ENCODE measurements at regions of chr14 and their contacts with region 1.

Region 1: GRCh38 chr14:50003213-50004031 is 110.5 kb downstream of the ARF6 start:
- DNase-seq: peak; percentile 89
- H3K4me3 ChIP-seq: peak overlapping the region; percentile 67
- H3K27ac ChIP-seq: peak overlapping the region; percentile 93
- H3K4me1 ChIP-seq: peaks cover 86% of the 10 kb centered on the region
- CTCF ChIP-seq: peak; percentile 38

Region 2: GRCh38 chr14:49598485-49599300 is 404.7 kb before region 1 on chr14 and contains the start of gene LRR1:
- CTCF ChIA-PET with region 1: no interaction called
- POLR2A ChIA-PET with region 1: no interaction called
- intact Hi-C with region 1: loop called (anchors 5 kb)
- DNase-seq: peak; percentile 88
- H3K4me3 ChIP-seq: peak within 1 kb of the TSS; percentile 99
- H3K27ac ChIP-seq: peak within 1 kb of the TSS; percentile 94
- H3K4me1 ChIP-seq: peaks cover 40% of the 10 kb centered on the region
- CTCF ChIP-seq: no peak
- total RNA-seq, gene LRR1: 83.4 and 89.8 TPM in 2 replicates

Region 3: DNA sequence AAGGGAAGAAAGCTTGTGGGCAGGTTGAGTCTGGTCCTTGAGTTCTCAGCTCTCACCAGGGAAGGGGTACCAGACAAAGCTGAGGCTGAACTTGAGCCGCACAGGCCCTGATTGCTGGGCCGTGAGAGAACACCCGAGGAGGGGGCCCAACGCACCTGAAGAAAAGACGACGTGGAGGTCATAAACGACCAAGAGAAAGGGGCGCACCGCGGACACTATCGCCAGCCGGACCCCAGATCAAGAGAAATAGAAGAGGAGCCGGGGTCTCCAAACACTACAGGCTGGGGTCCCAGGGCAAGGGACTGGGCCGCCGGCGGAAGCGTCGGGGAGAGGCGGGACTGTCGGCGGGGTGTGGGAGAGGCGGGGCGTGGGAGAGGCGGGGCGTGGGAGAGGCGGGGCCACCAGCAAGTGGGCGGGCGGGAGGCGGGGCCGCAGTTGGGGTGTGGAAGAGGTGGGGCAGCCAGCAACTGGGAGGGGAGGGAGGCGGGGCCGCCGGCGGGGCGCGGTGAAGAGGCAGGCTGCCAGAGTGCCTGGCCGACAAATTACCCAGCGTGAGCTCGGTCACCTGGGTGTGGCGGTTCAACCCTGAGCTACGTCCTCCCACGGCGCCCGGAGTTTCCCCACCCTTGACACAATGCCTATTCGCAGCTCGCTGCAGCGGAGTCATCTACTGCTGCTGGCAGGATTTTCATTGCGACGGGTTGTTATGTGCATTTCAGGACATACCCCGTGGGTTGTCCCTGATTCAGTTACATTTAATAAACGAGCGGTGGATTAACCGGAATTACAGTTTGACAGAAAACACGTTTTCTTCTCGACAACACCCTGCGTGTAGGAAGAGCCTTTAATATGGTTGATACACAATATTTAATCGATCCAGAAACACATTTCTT is 135.3 kb before region 1 on chr14:
- CTCF ChIA-PET with region 1: interaction called, 5 read pairs
- POLR2A ChIA-PET with region 1: interaction called, 11 read pairs
- intact Hi-C with region 1: loop called (anchors 1 kb)
- DNase-seq: peak; percentile 97
- H3K4me3 ChIP-seq: peak overlapping the region; percentile 71
- H3K27ac ChIP-seq: peak overlapping the region; percentile 75
- H3K4me1 ChIP-seq: peaks cover 50% of the 10 kb centered on the region
- CTCF ChIP-seq: no peak; the same call in 1 of the 2 replicates

Region 4: DNA sequence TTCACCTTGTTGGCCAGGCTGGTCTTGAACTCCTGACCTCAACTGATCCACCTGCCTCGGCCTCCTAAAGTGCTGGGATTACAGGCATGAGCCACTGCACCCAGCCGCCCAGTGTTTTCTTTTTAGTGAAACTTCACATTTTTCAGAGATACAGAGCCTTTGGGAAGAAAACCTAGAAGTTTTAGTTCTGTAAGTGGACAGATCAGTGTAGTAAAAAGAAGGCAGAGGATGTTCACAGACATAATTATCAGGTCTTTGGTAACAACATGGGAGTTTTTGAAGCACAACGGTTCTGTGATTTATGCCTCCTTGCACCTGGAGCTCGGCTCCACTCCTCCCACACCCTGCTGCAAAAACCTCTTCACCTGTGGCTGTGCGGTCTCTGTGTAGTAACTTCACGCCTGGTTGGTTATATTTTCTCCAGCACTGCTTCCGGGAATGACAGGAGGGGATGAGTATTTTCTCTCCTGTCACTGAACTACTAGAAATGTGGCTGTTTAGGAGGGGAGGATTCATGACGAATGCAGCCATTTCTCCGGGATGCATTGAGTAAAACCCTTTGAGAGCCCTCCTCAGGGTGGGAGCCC is 43.5 kb before region 1 on chr14:
- CTCF ChIA-PET with region 1: no interaction called
- POLR2A ChIA-PET with region 1: interaction called, 23 read pairs
- intact Hi-C with region 1: loop called (anchors 2 kb)
- DNase-seq: peak; percentile 96
- H3K4me3 ChIP-seq: peak overlapping the region; percentile 54
- H3K27ac ChIP-seq: peak overlapping the region; percentile 95
- H3K4me1 ChIP-seq: peaks cover 81% of the 10 kb centered on the region
- CTCF ChIP-seq: no peak

Region 5: GRCh38 chr14:50060871-50061663 is 57.6 kb after region 1 on chr14:
- CTCF ChIA-PET with region 1: interaction called, 5 read pairs
- POLR2A ChIA-PET with region 1: interaction called, 21 read pairs
- intact Hi-C with region 1: loop called (anchors 1 kb)
- DNase-seq: peak; percentile 41
- H3K4me3 ChIP-seq: peak overlapping the region; percentile 65
- H3K27ac ChIP-seq: peak overlapping the region; percentile 93
- H3K4me1 ChIP-seq: peaks cover 61% of the 10 kb centered on the region
- CTCF ChIP-seq: no peak

Region 6: DNA sequence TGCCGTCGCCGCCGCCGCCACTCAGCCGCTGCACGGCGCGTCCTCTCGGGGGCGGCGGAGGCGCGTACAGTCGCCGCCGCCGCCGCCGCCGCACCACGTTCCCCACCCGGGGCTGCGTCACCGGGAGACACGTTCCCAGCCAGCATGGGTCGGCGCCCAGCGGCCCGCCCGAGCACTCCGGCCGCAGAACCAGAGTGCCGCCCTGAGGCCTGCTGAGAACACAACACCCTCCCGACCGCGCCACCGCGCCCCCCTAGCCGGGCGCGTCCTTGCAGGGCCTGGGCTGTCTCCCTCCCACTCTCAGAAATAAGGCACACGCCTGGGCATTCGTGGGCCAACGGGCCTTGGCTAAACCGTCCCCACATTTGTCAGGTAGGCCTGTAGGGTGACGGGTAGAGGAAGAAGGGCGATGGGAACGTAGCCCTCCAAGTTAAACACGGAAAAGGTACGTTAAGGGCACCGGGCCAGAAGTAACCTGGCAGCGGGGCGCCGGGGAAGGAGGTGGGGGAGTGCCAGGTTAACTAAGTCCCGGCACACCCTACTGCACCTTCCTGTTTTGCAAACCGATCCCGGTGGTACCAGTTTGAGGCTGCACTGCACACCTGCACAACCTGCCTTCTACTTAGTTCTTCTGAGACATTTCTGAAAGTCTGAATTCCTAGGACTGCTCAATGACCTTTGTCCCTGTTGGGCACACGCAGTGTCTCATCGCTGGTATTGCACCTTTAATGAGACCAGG is 529.2 kb after region 1 on chr14 and contains the start of gene MAP4K5:
- CTCF ChIA-PET with region 1: no interaction called
- POLR2A ChIA-PET with region 1: no interaction called
- intact Hi-C with region 1: loop called (anchors 5 kb)
- DNase-seq: peak; percentile 93
- H3K4me3 ChIP-seq: peak within 1 kb of the TSS; percentile 89
- H3K27ac ChIP-seq: peak within 1 kb of the TSS; percentile 71
- H3K4me1 ChIP-seq: peaks cover 27% of the 10 kb centered on the region
- CTCF ChIP-seq: peak; percentile 85
- total RNA-seq, gene MAP4K5: 44.0 and 49.8 TPM in 2 replicates

Measured in OCI-LY7 (cell line).